ENCODE measurements at regions of chr7 and their contacts with region 1.

Region 1: GRCh38 chr7:26515314-26515842 is 223.7 kb downstream of the SNX10 start:
- DNase-seq: no peak

Region 2: GRCh38 chr7:25259587-25260243 is 1255.7 kb before region 1 on chr7:
- intact Hi-C with region 1: no loop called
- DNase-seq: no peak

Region 3: DNA sequence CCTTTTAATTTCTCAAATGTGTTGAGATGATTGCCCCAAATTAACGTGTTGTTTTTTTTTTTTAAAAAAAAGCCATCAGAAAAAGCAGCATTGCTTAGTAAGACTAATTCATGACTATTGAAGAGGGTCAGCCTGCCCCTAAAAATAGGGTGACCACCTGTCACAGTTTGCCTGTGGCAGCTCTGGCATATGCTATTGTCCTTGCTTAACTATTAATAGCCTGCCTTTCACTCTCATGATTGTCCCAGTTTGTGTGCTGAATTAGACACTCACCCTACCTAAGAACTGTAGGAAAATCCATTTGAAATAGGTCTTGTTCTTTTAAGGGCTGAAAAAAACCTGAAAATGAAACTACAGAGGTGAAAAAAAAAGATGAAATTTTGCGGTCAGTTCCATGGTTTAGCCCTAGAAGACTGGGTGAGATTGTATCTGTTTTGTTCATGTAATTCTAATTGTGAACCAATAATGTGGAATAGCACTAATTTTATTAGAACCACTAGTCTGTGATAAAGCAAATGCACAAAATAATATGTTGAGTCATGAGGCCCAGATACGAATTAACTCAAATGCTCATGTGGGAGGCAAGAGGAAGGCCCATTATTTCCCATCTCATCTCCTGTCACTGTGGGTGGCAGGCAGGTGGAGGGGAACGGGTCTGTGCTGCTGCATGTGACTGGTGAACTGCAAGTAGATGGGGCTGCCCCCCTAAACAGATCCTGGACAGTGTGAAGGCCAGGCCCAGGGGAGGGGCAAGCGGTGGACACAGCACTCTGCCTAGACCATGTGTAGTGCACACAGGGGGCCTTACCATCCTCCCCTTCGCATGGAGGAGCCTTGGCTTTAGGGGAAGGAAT is 628.8 kb before region 1 on chr7:
- intact Hi-C with region 1: loop called (anchors 10 kb)
- DNase-seq: no peak

Region 4: DNA sequence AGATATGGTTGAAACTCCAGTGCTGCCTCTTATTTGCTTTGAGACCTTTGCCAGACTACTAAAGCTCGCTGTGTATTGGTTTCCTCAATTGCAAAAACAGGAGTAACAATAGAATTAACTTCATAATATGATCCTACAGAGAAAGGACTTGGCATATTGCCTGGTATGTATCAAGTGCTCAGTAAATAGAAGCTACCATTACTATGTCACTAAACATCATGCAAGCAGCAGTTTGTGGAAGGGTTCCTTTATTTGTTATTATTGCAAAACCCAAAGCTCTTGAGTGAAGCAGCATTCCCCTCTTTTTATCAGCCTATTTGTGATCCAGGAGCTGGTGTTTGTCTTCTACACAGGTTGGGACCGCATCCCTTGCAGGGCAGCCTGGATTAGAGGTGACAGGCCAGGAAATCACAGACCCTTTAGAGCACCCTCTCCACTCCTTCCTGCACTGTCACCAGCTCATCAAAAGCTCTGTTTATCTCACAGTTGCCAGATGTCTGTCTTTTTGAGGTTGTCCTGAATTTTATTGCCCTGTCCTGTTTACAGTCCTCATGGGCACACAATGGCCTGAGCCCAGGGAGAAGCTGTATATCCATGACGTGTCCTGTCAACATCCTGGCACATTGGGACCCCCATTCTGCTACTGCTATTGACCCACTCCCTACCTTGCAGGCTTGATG is 102.2 kb before region 1 on chr7:
- intact Hi-C with region 1: no loop called
- DNase-seq: no peak

Measured in cardiac septum (tissue), 1 donor.